ENCODE measurements at regions of chr21 and their contacts with region 1.

Region 1: GRCh38 chr21:28745131-28746016 is 247.3 kb downstream of the LTN1 start:
- DNase-seq: peak; percentile 78
- H3K4me3 Mint-ChIP-seq: no peak overlapping the region
- H3K27ac Mint-ChIP-seq: no peak overlapping the region
- H3K4me1 Mint-ChIP-seq: no peaks in the 10 kb centered on the region
- H3K27me3 Mint-ChIP-seq: no peaks in the 10 kb centered on the region

Region 2: GRCh38 chr21:28516991-28517592 is 228.3 kb before region 1 on chr21:
- CTCF ChIA-PET with region 1: interaction called, 16 read pairs
- POLR2A ChIA-PET with region 1: no interaction called
- DNase-seq: peak; percentile 69
- H3K4me3 Mint-ChIP-seq: no peak overlapping the region
- H3K27ac Mint-ChIP-seq: no peak overlapping the region
- H3K4me1 Mint-ChIP-seq: no peaks in the 10 kb centered on the region
- H3K27me3 Mint-ChIP-seq: peaks cover 1% of the 10 kb centered on the region

Region 3: DNA sequence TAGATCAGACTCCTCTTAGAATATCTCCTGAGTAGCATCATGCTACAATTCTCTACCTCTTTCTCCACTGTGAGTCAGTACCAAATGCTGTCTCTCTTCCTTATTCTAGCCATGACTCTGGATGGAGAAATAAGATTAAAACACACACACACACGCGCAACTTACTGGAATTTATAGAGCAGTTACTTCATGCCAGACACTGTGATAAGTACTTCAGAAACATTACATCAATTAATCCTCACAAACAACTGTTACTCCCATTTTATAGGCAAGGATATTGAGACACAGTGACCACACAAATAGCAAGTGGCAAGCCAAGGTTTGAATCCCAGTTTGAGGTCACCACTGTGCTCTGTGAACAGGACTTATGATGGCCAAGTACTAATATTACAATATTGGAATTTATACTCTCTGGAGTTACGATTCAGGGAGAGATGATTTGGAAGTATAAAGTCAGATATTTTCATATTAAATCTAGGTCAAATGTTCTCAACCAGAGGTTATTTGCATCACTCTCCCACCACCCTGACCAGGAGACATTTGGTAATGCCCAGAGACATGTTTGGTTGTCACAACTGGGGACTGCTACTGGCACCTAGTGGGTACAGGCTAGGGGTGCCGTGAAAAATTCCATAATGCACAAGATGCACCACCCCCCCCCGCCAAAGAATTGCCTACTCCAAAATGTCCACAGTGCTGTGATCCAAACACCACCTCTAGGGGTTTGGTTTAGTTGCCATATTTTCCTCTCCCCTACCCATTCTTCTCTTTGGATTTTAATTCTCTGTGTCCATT is 25.7 kb after region 1 on chr21:
- CTCF ChIA-PET with region 1: interaction called, 10 read pairs
- POLR2A ChIA-PET with region 1: no interaction called
- DNase-seq: no peak
- H3K4me3 Mint-ChIP-seq: no peak overlapping the region
- H3K27ac Mint-ChIP-seq: no peak overlapping the region
- H3K4me1 Mint-ChIP-seq: peaks cover 18% of the 10 kb centered on the region
- H3K27me3 Mint-ChIP-seq: no peaks in the 10 kb centered on the region